K562 (cell line): ENCODE measurements at regions of chr2 and their contacts with region 1.

Region 1: DNA sequence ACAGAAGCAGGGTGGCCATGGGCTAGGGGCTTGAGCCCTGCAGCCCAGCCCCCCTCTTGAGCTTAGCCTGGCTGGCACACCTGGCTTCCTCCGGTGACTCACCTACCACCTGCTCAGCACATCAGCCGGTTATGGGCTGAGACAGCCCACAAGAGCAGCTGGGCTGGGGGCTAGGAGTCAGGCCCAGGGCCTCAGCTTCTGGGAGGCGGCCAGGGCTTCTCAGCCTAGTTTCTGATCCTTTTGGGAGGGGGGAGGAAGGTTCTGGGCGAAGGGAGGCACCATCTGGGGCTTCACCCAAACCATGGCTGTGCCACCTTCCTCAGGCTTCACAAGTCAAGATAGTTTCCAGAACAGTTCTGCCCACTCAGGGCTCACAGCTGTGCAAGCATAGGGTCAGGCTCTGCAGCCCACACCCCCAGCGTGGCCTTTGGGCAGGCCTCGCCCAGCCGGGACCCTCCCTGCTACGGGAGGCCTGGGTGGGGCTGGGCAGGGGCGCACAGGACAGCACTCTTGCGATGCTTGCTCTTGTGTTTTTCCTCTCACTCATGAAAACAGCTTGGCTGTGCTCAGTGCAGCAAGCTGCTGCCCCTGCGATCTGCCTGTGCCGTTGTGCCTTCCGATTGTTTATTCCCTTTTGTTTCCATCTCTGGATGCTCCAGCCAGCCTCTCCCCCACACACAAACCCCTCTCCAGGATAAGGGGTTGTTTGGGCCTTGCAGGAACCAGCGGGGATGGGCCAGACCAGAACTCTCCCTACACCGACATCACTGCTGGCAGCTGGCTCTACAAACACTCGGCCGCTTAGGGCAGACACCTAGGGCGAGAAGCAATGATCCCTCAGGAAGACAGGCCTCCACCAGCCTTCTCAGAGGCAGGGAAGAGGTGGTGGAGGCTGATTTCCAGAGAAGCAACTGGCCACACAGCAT is 26.1 kb upstream of the SEMA4C start:
- DNase-seq: peak in 2 of 4 experiments; percentile 51 to 59
- ATAC-seq: peak; percentile 32
- H3K4me3 ChIP-seq: no peak overlapping the region
- H3K27ac ChIP-seq: peak overlapping the region; percentile 91
- H3K4me1 ChIP-seq: peaks cover 63 to 86% of the 10 kb centered on the region in 2 experiments
- H3K27me3 ChIP-seq: no peaks in the 10 kb centered on the region
- CTCF ChIP-seq: no peak
- EP300 ChIP-seq: no peak
- POLR2A ChIP-seq: no peak
- RAD21 ChIP-seq: no peak

Region 2: GRCh38 chr2:96918754-96919550 is 23.0 kb after region 1 on chr2:
- CTCF ChIA-PET with region 1: no interaction called
- POLR2A ChIA-PET with region 1: interaction called, 5 read pairs
- in situ Hi-C with region 1: no loop called
- intact Hi-C with region 1: loop called (anchors 2 kb)
- DNase-seq: peak; percentile 73 to 92 (median 80)
- ATAC-seq: peak; percentile 90
- H3K4me3 ChIP-seq: peak overlapping the region; percentile 14; the same call in 1 of the 2 replicates
- H3K27ac ChIP-seq: peak overlapping the region; percentile 90
- H3K4me1 ChIP-seq: peaks cover 68 to 69% of the 10 kb centered on the region in 2 experiments
- H3K27me3 ChIP-seq: no peaks in the 10 kb centered on the region
- CTCF ChIP-seq: no peak
- EP300 ChIP-seq: peak; percentile 96
- POLR2A ChIP-seq: no peak
- RAD21 ChIP-seq: no peak

Region 3: DNA sequence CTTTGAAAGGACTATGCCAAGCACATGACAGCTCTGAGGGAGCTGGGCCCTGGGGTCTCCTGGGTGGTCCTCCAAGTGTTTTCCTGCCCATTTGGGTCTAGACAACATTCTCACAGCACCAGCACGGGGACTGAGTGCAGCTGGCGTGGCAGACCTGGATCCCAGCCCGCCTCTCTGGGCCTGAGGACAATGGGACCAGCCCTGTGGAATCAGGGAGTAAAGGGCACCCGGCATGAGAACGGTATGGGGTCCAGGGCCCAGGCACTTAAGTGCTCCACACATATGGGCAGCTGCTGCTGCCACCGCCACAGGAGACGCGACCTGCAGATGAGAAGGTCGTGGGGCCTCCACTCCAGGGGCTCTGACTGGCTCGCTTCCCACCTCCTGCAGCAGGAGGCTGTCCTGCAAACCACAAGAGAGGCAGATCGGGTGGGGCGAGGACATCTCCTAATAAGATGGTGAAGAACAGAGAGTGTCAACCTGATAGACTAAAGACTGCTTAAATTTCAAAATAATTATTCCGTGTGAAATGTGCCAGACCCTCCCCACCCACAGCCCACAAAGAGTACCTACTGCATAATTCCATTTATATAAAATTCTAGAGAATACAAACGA is 44.1 kb after region 1 on chr2:
- CTCF ChIA-PET with region 1: no interaction called
- POLR2A ChIA-PET with region 1: interaction called, 5 read pairs
- in situ Hi-C with region 1: no loop called
- intact Hi-C with region 1: loop called (anchors 5 kb)
- DNase-seq: no peak
- ATAC-seq: no peak; the same call in 2 of the 3 replicates
- H3K4me3 ChIP-seq: no peak overlapping the region
- H3K27ac ChIP-seq: no peak overlapping the region
- H3K4me1 ChIP-seq: peaks cover 11 to 13% of the 10 kb centered on the region in 2 experiments; a peak in 4 of 5 replicates
- H3K27me3 ChIP-seq: no peaks in the 10 kb centered on the region
- CTCF ChIP-seq: no peak
- EP300 ChIP-seq: no peak
- POLR2A ChIP-seq: no peak
- RAD21 ChIP-seq: no peak